ENCODE measurements at regions of chr6 and their contacts with region 1.

Region 1: GRCh38 chr6:2634139-2634964 is 116.4 kb downstream of the MYLK4 start:
- DNase-seq: peak; percentile 72
- H3K4me3 Mint-ChIP-seq: peak overlapping the region; percentile 58
- H3K27ac Mint-ChIP-seq: no peak overlapping the region
- H3K4me1 Mint-ChIP-seq: peaks cover 3% of the 10 kb centered on the region
- H3K27me3 Mint-ChIP-seq: peaks cover 15% of the 10 kb centered on the region

Region 2: DNA sequence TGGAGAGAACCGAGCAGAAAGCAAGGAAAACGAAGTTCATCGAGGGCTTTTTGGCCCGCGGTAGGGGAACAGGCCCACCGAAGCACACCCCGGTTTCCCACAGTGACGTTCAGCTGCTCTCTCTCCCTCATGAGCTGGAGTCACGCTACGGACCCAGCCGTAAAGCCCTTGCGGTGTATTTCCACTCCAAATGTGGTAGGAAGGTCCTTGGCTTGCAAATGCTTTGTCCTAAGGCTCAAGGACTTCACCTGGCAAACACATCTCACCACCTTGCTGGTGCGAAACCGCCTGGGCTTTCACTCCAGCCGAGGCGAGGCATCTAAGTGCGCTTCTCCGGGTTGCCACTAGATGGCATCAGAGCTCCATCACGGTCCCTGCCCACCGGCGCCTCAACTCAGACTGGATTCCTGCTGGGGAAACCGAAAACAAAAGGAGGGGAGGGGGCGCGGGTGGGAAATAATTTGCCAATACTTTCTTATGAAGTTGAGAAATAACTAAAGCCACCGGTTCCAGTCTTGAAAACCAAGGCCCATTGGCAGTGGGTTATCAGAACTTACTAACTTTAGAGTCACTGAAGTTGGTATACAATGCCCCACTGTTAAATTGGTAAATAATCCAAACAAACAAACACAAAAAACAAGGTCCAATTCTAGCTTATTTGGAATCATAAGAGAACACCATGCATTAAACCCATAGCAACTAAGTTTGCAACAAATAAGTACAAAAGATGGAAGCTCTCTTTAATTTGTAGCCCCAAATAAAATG is 1038.1 kb before region 1 on chr6:
- intact Hi-C with region 1: loop called (anchors 1 kb)
- DNase-seq: peak; percentile 42
- H3K4me3 Mint-ChIP-seq: no peak overlapping the region
- H3K27ac Mint-ChIP-seq: no peak overlapping the region
- H3K4me1 Mint-ChIP-seq: no peaks in the 10 kb centered on the region
- H3K27me3 Mint-ChIP-seq: peaks cover 55% of the 10 kb centered on the region

Region 3: DNA sequence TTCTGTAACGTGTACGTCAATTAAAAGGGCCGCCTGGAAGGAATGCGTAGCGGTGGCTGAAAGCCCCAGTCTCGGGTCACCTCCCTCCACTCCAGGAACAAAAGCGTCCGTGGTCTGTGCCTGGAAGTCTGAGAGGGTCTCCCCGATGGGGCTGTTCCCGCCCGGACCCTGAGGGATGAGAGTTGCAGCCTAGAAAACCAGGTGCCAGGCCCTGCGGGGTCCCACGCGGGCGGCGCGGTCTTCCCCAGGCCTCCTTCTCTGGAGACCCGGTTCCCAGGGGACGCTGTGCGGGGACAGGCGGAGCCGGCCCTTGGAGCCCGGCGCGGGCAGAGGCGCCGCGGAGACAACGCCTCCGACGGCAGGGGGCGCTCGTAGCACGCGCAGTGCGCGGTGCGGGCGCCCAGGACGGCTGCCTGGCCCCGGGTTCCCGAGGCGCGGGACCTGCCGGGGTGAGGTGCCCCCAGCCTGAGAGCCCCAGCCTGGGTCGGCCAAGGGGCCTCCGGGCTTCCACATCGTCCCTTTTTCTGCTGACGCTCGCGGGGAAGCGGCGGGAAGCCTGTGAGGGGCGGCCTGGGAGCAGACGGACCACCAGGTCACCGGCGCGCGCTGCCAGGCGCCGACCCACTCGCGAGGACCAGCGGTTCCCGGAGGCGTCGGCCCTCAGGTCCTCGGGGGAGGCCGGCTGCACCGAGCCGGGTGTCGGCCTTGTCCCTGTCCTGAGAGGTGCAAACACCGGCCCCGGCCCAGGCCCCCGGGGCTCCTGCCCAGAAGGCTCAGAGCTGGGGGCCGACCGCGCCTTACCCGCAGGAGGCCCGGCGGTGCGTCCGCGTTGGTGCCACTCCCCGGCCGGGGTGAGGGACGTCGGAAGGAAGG is 1030.0 kb before region 1 on chr6:
- intact Hi-C with region 1: loop called (anchors 2 kb)
- DNase-seq: peak; percentile 40
- H3K4me3 Mint-ChIP-seq: no peak overlapping the region
- H3K27ac Mint-ChIP-seq: no peak overlapping the region
- H3K4me1 Mint-ChIP-seq: peaks cover 10% of the 10 kb centered on the region
- H3K27me3 Mint-ChIP-seq: peaks cover 82% of the 10 kb centered on the region

Region 4: DNA sequence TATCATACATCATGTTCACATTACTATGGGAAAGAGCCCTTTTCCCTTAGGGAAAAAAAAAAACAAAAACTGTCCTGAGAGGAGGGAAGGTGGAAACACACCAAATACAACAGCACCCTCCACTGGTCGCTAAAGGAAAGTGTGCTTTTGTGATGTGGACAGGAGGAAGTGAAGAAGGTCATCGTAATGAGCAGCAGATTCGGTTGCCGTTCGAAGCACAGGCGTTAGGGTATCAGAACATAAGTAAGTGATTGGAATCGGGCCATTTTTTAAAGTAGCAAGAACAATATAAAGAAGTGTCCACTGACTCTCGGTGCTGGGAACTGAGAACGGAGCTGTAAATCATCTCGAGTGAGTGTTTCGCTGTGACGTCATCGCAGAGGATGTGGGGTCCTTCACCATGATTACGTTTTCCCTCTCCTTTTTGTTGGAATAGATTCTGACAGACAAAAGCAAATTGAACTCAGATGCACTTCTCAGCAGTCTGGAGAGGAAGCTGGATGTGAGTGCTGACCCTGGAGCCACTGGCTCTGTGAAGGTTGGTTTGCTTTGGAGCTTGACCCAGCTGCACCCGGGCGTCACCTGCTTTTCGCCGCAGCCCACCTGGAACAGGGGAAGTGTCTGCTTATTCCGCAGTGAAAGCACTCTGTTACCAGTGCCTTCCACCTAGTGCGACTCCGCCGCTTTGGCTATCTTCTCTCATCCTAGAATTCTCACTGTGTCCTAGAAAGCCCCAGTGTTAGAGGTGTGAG is 185.4 kb before region 1 on chr6:
- intact Hi-C with region 1: loop called (anchors 2 kb)
- DNase-seq: no peak
- H3K4me3 Mint-ChIP-seq: peak overlapping the region; percentile 24
- H3K27ac Mint-ChIP-seq: no peak overlapping the region
- H3K4me1 Mint-ChIP-seq: peaks cover 4% of the 10 kb centered on the region
- H3K27me3 Mint-ChIP-seq: peaks cover 27% of the 10 kb centered on the region

Region 5: GRCh38 chr6:3068329-3069214 is 434.2 kb after region 1 on chr6 and contains the start of gene RIPK1:
- intact Hi-C with region 1: no loop called
- DNase-seq: peak; percentile 95
- H3K4me3 Mint-ChIP-seq: peak within 1 kb of the TSS; percentile 95
- H3K27ac Mint-ChIP-seq: peak within 1 kb of the TSS; percentile 95
- H3K4me1 Mint-ChIP-seq: peaks cover 55% of the 10 kb centered on the region
- H3K27me3 Mint-ChIP-seq: no peaks in the 10 kb centered on the region
- total RNA-seq, gene RIPK1: 18.3 and 19.0 TPM in 2 replicates

Measured in activated T-helper 2 cell treated with anti-CD3 and anti-CD28 coated beads, Interferon-gamma antibody, Interleukin-2, Interleukin-4, amounts not matched to agents 10 μg/mL and 5 μg/mL and 100 μg/mL, durations not matched to agents 14 hours and 24 hours and 36 hours (primary cell).